Calu3 (cell line): ENCODE measurements at regions of chr6 and their contacts with region 1.

Region 1: DNA sequence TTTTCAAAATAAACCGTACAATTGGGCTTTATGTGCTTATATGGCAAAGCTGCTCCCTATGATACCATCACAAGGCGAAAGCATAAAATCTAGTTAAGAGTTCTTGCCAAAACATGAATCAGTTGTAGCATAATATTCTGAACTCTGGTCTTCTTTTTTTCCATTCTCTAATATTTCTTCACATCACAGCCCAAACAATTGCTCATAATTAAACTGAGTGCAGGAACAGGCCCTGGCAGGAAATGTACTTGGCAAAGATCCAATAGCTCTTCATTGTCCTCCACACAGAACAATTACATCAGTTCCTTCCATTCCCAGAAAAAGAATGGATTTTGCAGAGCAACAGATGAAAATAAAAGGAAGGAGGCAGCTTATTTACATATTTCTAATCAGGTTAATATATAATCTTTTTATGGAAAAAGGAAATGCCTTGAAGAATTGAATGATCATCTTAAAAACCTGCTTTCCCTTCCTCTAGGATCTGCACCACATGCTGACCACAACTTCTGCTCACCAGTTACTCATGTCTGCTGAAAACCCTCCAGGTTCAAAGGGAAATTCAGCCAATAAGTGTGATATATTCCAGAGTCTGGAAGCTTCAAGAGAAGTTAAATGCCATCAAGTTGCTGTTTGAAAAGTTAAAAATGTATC is 123.3 kb upstream of the COL21A1 start:
- DNase-seq: no peak
- H3K4me3 Mint-ChIP-seq: peak overlapping the region; percentile 55
- H3K27ac Mint-ChIP-seq: peak overlapping the region; percentile 85
- H3K4me1 Mint-ChIP-seq: peaks cover 18% of the 10 kb centered on the region
- H3K27me3 Mint-ChIP-seq: no peaks in the 10 kb centered on the region
- CTCF ChIP-seq: no peak

Region 2: GRCh38 chr6:56417827-56418226 is 47.1 kb after region 1 on chr6:
- CTCF ChIA-PET with region 1: interaction called, 6 read pairs
- intact Hi-C with region 1: loop called (anchors 1 kb)
- DNase-seq: no peak
- H3K4me3 Mint-ChIP-seq: no peak overlapping the region
- H3K27ac Mint-ChIP-seq: no peak overlapping the region
- H3K4me1 Mint-ChIP-seq: no peaks in the 10 kb centered on the region
- H3K27me3 Mint-ChIP-seq: no peaks in the 10 kb centered on the region
- CTCF ChIP-seq: no peak

Region 3: GRCh38 chr6:56542364-56543331 is 172.0 kb after region 1 on chr6:
- CTCF ChIA-PET with region 1: interaction called, 17 read pairs
- intact Hi-C with region 1: no loop called
- DNase-seq: peak; percentile 90
- H3K4me3 Mint-ChIP-seq: no peak overlapping the region
- H3K27ac Mint-ChIP-seq: no peak overlapping the region
- H3K4me1 Mint-ChIP-seq: peaks cover 14% of the 10 kb centered on the region
- H3K27me3 Mint-ChIP-seq: no peaks in the 10 kb centered on the region
- CTCF ChIP-seq: no peak